Ascending aorta (tissue), 2 donors: ENCODE measurements at regions of chr7 and their contacts with region 1.

Region 1: GRCh38 chr7:71272509-71273490 is 140.9 kb downstream of the GALNT17 start:
- DNase-seq: no peak
- H3K4me3 ChIP-seq: no peak overlapping the region
- H3K27ac ChIP-seq: peak overlapping the region; percentile 73 to 75
- H3K4me1 ChIP-seq: peaks cover 0 to 27% of the 10 kb centered on the region in 2 donors
- H3K27me3 ChIP-seq: no peaks in the 10 kb centered on the region
- CTCF ChIP-seq: no peak

Region 2: GRCh38 chr7:71131256-71132126 is 141.3 kb before region 1 on chr7:
- intact Hi-C with region 1: loop called (anchors 10 kb)
- DNase-seq: peak in 1 of 2 donors; percentile 76
- H3K4me3 ChIP-seq: peak overlapping the region; percentile 77 to 81
- H3K27ac ChIP-seq: peak overlapping the region; percentile 46 to 73
- H3K4me1 ChIP-seq: peaks cover 0 to 3% of the 10 kb centered on the region in 2 donors
- H3K27me3 ChIP-seq: no peaks in the 10 kb centered on the region
- CTCF ChIP-seq: peak in 2 of 3 experiments; percentile 23 to 36

Region 3: DNA sequence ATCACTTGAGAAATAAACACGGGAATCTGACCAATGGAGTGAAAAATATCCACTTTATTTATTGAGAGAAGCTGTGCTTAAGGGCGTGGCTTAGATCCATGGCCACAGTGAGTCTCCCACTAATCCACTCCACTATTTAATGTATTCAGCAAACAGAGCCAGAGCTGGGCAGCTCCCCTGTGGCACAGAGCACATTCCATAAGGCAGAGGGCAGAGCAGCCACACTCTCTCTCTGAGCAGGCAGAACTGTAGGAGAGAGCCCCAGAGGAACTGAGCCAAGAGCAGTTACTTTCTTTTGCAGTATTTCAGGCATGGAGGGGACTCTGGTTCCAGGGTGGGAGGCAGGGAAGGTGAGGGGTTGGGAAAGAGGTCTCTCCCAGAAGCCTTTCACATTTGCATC is 34.9 kb before region 1 on chr7:
- intact Hi-C with region 1: loop called (anchors 2 kb)
- DNase-seq: peak in 1 of 2 donors; percentile 72
- H3K4me3 ChIP-seq: no peak overlapping the region
- H3K27ac ChIP-seq: peak overlapping the region; percentile 79 to 84
- H3K4me1 ChIP-seq: peaks cover 0 to 21% of the 10 kb centered on the region in 2 donors
- H3K27me3 ChIP-seq: no peaks in the 10 kb centered on the region
- CTCF ChIP-seq: peak in 2 of 3 experiments; percentile 49 to 59

Region 4: DNA sequence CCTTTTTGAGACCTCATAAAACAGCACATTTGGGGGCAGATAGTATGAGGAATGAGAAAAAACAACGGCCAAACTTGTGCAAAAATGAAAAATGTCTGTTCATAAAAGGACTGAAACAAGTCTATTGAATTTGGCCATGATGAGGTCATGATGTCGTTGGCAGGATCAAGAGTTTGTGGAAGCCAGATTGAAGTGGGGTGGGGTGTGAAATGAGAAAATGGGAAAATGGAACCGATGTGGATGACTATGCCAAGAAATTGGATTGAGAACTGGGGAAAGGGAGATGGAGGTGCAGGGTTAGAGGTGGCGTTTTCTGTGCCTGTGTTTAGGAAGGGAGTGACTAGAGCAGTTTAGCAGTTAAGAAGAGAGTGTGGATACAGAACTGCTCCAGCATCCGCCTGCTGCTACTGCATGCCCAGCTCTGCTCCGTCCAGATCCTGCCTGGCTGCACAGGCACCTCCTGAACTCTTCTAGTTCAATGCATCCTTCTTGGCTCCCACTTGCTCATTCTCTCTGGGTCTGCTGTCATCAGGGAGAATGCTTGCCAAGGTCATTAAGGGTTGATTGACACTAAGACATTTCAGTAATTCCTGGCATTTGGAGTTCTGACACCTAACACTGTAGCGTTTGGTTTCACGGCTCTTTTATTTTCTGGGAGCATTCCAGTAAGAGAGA is 28.9 kb before region 1 on chr7:
- intact Hi-C with region 1: loop called (anchors 2 kb)
- DNase-seq: no peak
- H3K4me3 ChIP-seq: peak overlapping the region in 1 of 2 donors; percentile 23
- H3K27ac ChIP-seq: peak overlapping the region in 1 of 2 donors; percentile 3
- H3K4me1 ChIP-seq: peaks cover 0 to 16% of the 10 kb centered on the region in 2 donors
- H3K27me3 ChIP-seq: no peaks in the 10 kb centered on the region
- CTCF ChIP-seq: no peak

Region 5: GRCh38 chr7:71308096-71308495 is 35.3 kb after region 1 on chr7:
- intact Hi-C with region 1: loop called (anchors 2 kb)
- DNase-seq: peak; percentile 42 to 92
- H3K4me3 ChIP-seq: peak overlapping the region in 1 of 2 donors; percentile 29
- H3K27ac ChIP-seq: peak overlapping the region; percentile 80 to 89
- H3K4me1 ChIP-seq: peaks cover 9 to 39% of the 10 kb centered on the region in 2 donors
- H3K27me3 ChIP-seq: no peaks in the 10 kb centered on the region
- CTCF ChIP-seq: no peak